Mammary epithelial cell (primary cell): ENCODE measurements at regions of chr12 and their contacts with region 1.

Region 1: DNA sequence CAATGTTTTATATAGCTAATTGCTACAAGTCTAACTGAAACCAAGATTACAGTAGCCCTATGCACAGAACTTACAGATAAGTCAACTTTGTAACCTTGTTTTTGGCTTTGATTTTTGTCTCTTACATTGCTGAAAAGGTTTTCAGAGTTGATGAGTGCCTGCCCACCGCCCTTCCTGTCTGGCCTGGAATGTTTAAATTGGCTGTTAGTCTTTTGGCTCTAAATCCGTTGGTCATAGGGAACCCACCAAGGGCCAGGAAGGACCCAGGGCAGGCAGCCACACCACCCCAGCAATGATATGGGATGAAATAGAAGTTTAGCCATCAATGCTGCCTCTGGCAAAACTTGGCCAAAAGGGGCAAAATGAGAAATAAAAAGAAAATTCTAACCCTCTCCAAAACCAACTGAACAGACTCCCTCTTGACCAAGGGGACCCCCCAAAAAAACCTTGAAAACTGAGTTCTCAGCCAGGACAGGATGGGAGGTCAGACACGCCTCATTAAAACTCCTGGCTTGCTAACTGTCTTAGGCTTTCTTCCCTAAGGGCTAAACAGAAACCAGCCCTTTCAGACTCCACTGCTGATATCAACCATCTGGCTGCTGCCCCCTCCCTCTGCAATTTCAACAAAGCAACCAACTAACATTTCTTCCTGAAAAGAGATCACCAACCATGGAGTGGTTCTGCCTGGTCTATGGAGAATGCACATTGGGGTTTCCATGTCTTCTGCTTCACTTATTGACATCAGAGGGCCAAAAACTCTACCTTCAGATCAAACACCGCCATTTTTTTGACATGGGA is 242.1 kb upstream of the NOS1 start:
- DNase-seq: no peak
- H3K4me3 ChIP-seq: no peak overlapping the region
- H3K27ac ChIP-seq: no peak overlapping the region
- H3K4me1 ChIP-seq: no peaks in the 10 kb centered on the region
- H3K27me3 ChIP-seq: no peaks in the 10 kb centered on the region
- CTCF ChIP-seq: no peak

Region 2: GRCh38 chr12:117552971-117553370 is 50.5 kb before region 1 on chr12:
- CTCF ChIA-PET with region 1: no interaction called
- dilution Hi-C with region 1: loop called (anchors 5 kb)
- in situ Hi-C with region 1: no loop called
- intact Hi-C with region 1: no loop called
- DNase-seq: no peak
- H3K4me3 ChIP-seq: no peak overlapping the region
- H3K27ac ChIP-seq: no peak overlapping the region
- H3K4me1 ChIP-seq: no peaks in the 10 kb centered on the region
- H3K27me3 ChIP-seq: no peaks in the 10 kb centered on the region
- CTCF ChIP-seq: no peak

Region 3: GRCh38 chr12:117671734-117672133 is 68.2 kb after region 1 on chr12:
- CTCF ChIA-PET with region 1: no interaction called
- dilution Hi-C with region 1: loop called (anchors 5 kb)
- in situ Hi-C with region 1: no loop called
- intact Hi-C with region 1: no loop called
- DNase-seq: no peak
- H3K4me3 ChIP-seq: no peak overlapping the region
- H3K27ac ChIP-seq: no peak overlapping the region
- H3K4me1 ChIP-seq: no peaks in the 10 kb centered on the region
- H3K27me3 ChIP-seq: no peaks in the 10 kb centered on the region
- CTCF ChIP-seq: peak in 1 of 2 donors; percentile 15